ENCODE measurements at regions of chr2 and their contacts with region 1.

Region 1: GRCh38 chr2:190880378-190881073 is at the start of gene GLS:
- DNase-seq: peak; percentile 89 to 97 (median 95)
- ATAC-seq: peak; percentile 87
- H3K4me3 ChIP-seq: peak within 1 kb of the TSS; percentile 92
- H3K4me3 Mint-ChIP-seq: peak within 1 kb of the TSS; percentile 90 to 100 (median 96)
- H3K27ac ChIP-seq: peak within 1 kb of the TSS; percentile 93
- H3K27ac Mint-ChIP-seq: peak within 1 kb of the TSS; percentile 95 to 98 (median 97)
- H3K4me1 ChIP-seq: peaks cover 17 to 23% of the 10 kb centered on the region in 2 donors
- H3K4me1 Mint-ChIP-seq: peaks cover 25 to 72% (median 62%) of the 10 kb centered on the region in 7 donors
- H3K27me3 ChIP-seq: no peaks in the 10 kb centered on the region
- H3K27me3 Mint-ChIP-seq: no peaks in the 10 kb centered on the region
- total RNA-seq, gene GLS: 167 to 234 (median 202) TPM

Region 2: GRCh38 chr2:189580658-189581353 is 1299.7 kb before region 1 on chr2 and contains the start of gene SLC40A1:
- CTCF ChIA-PET with region 1: no interaction called
- POLR2A ChIA-PET with region 1: no interaction called
- intact Hi-C with region 1: loop called in 1 of 2 experiments (anchors 10 kb)
- DNase-seq: peak; percentile 54 to 75 (median 66)
- ATAC-seq: peak; percentile 96
- H3K4me3 ChIP-seq: peak within 1 kb of the TSS; percentile 79
- H3K4me3 Mint-ChIP-seq: peak within 1 kb of the TSS; percentile 83 to 100 (median 93)
- H3K27ac ChIP-seq: peak within 1 kb of the TSS; percentile 80
- H3K27ac Mint-ChIP-seq: peak within 1 kb of the TSS; percentile 30 to 98 (median 87)
- H3K4me1 ChIP-seq: peaks cover 0 to 12% of the 10 kb centered on the region in 2 donors
- H3K4me1 Mint-ChIP-seq: peaks cover 24 to 63% (median 56%) of the 10 kb centered on the region in 7 donors
- H3K27me3 ChIP-seq: peaks cover 0 to 5% of the 10 kb centered on the region in 2 donors
- H3K27me3 Mint-ChIP-seq: peaks cover 0 to 47% (median 0%) of the 10 kb centered on the region in 5 donors
- total RNA-seq, gene SLC40A1: 4.2 to 38.0 (median 24.4) TPM

Region 3: GRCh38 chr2:189783927-189784867 is 1096.3 kb before region 1 on chr2 and contains the starts of genes ORMDL1 and PMS1:
- CTCF ChIA-PET with region 1: no interaction called
- POLR2A ChIA-PET with region 1: no interaction called
- intact Hi-C with region 1: loop called (anchors 5 kb)
- DNase-seq: peak; percentile 90 to 96 (median 94)
- ATAC-seq: peak; percentile 95
- H3K4me3 ChIP-seq: peak within 1 kb of the TSS; percentile 76
- H3K4me3 Mint-ChIP-seq: peak within 1 kb of the TSS; percentile 86 to 97 (median 94)
- H3K27ac ChIP-seq: peak within 1 kb of the TSS; percentile 92
- H3K27ac Mint-ChIP-seq: peak within 1 kb of the TSS; percentile 89 to 97 (median 95)
- H3K4me1 ChIP-seq: peaks cover 21 to 24% of the 10 kb centered on the region in 2 donors
- H3K4me1 Mint-ChIP-seq: peaks cover 26 to 72% (median 57%) of the 10 kb centered on the region in 7 donors
- H3K27me3 ChIP-seq: no peaks in the 10 kb centered on the region
- H3K27me3 Mint-ChIP-seq: no peaks in the 10 kb centered on the region
- total RNA-seq, gene ORMDL1: 80.1 to 208 (median 142) TPM
- total RNA-seq, gene PMS1: 18.2 to 30.1 (median 22.5) TPM

Region 4: DNA sequence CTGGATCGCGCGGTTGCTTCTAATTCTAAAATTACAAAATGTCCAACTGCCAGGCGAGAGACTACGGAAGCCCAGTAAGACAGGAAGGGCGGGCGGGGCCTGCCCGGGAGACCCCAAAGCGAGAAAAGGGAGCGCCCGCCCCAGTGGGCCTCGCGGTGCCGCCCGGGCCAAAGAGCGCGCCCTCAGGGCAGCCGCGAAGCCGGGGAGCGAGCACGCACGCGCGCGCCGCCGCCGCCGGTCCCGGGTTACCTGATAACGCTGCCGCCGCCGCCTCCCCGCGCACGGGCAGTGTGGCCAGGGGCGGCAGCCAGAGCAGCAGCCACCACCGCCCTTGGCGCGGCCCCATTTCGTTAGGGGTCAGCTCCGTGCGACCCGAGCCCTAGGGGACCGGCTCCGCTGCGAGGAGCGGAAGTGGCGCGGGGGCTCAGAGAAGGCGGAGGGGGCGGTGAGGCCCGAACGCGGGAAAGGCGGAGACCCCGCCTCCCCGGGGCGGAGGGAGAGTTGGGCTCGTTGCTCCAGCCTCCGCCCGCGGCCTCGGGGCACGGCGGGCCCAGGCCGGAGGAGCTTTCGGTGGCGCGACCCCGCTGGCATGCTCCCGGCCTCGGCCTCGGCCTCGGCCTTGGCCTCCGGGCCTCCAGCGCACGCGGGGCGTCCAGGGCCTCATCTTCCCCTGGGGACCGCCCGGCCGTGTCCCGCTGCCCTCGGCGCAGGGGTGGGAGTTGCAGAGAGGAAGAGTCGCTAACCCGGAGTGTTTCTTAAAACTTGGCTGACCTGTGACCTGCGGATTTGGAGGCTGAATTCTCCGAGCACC is 346.0 kb before region 1 on chr2 and contains the start of gene NEMP2:
- CTCF ChIA-PET with region 1: no interaction called
- POLR2A ChIA-PET with region 1: interaction called, 3 read pairs
- intact Hi-C with region 1: loop called (anchors 1 kb)
- DNase-seq: peak; percentile 72 to 88 (median 78)
- ATAC-seq: peak; percentile 83
- H3K4me3 ChIP-seq: peak within 1 kb of the TSS; percentile 73
- H3K4me3 Mint-ChIP-seq: peak within 1 kb of the TSS; percentile 91 to 99 (median 97)
- H3K27ac ChIP-seq: peak within 1 kb of the TSS; percentile 96
- H3K27ac Mint-ChIP-seq: peak within 1 kb of the TSS; percentile 99 to 100 (median 100)
- H3K4me1 ChIP-seq: peaks cover 20 to 36% of the 10 kb centered on the region in 2 donors
- H3K4me1 Mint-ChIP-seq: peaks cover 19 to 63% (median 60%) of the 10 kb centered on the region in 7 donors
- H3K27me3 ChIP-seq: no peaks in the 10 kb centered on the region
- H3K27me3 Mint-ChIP-seq: no peaks in the 10 kb centered on the region
- total RNA-seq, gene NEMP2: 11.1 to 30.8 (median 18.4) TPM

Region 5: DNA sequence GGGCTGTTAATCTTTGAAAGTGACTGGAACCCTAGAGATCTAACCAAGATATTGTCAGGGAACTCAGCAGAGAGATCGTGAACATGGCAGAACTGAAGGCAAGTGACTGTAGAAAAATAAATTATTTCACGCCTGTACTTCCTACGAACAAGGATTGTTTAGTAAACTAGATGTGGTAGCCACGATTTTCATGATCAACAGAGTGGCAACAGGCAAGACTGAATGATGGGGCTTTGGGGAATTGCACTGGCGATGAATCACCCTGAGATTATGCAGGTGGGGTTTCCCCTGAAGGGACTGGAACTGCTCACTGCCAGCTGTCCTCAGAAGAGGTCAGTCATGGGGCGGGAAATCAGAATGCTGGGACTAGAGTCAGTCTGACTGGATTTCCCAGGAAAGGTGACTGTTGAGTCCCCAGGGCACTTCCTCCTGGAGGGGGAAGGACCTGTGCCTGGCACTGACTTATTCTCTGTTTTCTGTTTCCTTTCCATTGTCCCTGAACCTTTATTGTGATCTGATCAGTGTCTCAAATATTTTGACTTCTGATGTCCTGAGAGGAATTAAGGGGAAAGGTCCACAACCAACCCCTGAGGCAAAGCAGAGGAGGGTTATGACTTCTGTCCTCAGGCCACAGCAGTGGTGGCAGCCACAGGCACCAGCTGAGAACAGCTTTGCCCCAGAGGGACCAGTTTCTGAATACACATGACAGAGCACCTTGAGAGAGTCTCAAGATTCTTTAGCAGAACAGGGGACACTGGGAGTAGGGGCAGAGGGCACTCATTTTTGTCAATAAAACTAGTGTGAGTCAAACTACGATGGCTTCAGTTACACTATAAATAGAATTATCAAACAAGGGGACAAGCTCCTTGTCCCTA is 161.6 kb before region 1 on chr2:
- CTCF ChIA-PET with region 1: no interaction called
- POLR2A ChIA-PET with region 1: no interaction called
- intact Hi-C with region 1: no loop called
- DNase-seq: peak in 1 of 9 donors; percentile 68
- ATAC-seq: peak; percentile 29
- H3K4me3 ChIP-seq: no peak overlapping the region
- H3K4me3 Mint-ChIP-seq: no peak overlapping the region
- H3K27ac ChIP-seq: no peak overlapping the region
- H3K27ac Mint-ChIP-seq: peak overlapping the region in 1 of 9 donors; percentile 45
- H3K4me1 ChIP-seq: peaks cover 0 to 8% of the 10 kb centered on the region in 2 donors
- H3K4me1 Mint-ChIP-seq: peaks cover 0 to 31% (median 16%) of the 10 kb centered on the region in 7 donors
- H3K27me3 ChIP-seq: no peaks in the 10 kb centered on the region
- H3K27me3 Mint-ChIP-seq: no peaks in the 10 kb centered on the region

Region 6: GRCh38 chr2:190863946-190864345 is 16.6 kb before region 1 on chr2:
- CTCF ChIA-PET with region 1: interaction called, 5 read pairs
- POLR2A ChIA-PET with region 1: interaction called, 57 read pairs
- intact Hi-C with region 1: loop called in 1 of 2 experiments (anchors 1 kb)
- DNase-seq: no peak
- ATAC-seq: no peak
- H3K4me3 ChIP-seq: no peak overlapping the region
- H3K4me3 Mint-ChIP-seq: peak overlapping the region in 7 of 10 donors; percentile 13 to 48 (median 30)
- H3K27ac ChIP-seq: no peak overlapping the region
- H3K27ac Mint-ChIP-seq: peak overlapping the region in 6 of 9 donors; percentile 43 to 85 (median 66)
- H3K4me1 ChIP-seq: peaks cover 0 to 13% of the 10 kb centered on the region in 2 donors
- H3K4me1 Mint-ChIP-seq: peaks cover 4 to 36% (median 27%) of the 10 kb centered on the region in 7 donors
- H3K27me3 ChIP-seq: no peaks in the 10 kb centered on the region
- H3K27me3 Mint-ChIP-seq: peaks cover 0 to 7% (median 0%) of the 10 kb centered on the region in 5 donors

Region 7: DNA sequence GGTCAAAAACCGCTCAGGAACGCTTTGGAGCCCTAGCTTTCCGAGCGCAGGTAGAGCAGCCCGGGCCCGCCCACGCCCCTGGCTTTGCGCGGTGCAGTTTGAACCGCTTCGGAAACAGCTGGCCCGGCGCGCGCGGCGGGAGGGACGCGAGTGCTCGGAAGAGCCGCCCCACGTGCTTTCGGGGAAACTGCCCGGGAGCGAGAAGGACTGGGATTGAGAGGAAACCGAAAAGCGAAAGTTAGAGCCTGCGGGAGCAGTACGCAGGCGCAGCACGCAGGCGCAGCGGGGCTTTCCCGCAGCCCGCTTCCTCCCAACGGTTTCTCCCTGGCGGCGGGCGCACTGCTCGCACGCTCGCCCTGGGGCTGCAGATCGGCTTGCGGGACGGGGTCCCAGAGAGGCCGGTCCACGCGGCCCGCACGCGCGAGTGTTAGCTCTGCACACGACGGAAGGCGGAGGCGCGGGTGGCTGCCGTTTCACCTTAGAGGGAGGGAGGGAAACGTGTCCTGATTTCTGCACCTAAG is 139.8 kb after region 1 on chr2:
- CTCF ChIA-PET with region 1: no interaction called
- POLR2A ChIA-PET with region 1: interaction called, 40 read pairs
- intact Hi-C with region 1: loop called in 1 of 2 experiments (anchors 1 kb)
- DNase-seq: peak; percentile 89 to 99 (median 94)
- ATAC-seq: peak; percentile 88
- H3K4me3 ChIP-seq: peak overlapping the region; percentile 78
- H3K4me3 Mint-ChIP-seq: no peak overlapping the region
- H3K27ac ChIP-seq: peak overlapping the region; percentile 82
- H3K27ac Mint-ChIP-seq: no peak overlapping the region
- H3K4me1 ChIP-seq: peaks cover 44 to 48% of the 10 kb centered on the region in 2 donors
- H3K4me1 Mint-ChIP-seq: peaks cover 11 to 46% (median 32%) of the 10 kb centered on the region in 7 donors
- H3K27me3 ChIP-seq: no peaks in the 10 kb centered on the region
- H3K27me3 Mint-ChIP-seq: peaks cover 0 to 2% (median 0%) of the 10 kb centered on the region in 5 donors

Measured in naive thymus-derived CD4-positive, alpha-beta T cell (primary cell).